AG04450 (cell line): ENCODE measurements at regions of chr14 and their contacts with region 1.

Region 1: GRCh38 chr14:64026600-64026999 is 173.8 kb downstream of the SYNE2 start:
- DNase-seq: no peak
- H3K4me3 ChIP-seq: no peak overlapping the region
- H3K27ac ChIP-seq: no peak overlapping the region
- H3K27me3 ChIP-seq: no peaks in the 10 kb centered on the region
- CTCF ChIP-seq: no peak

Region 2: DNA sequence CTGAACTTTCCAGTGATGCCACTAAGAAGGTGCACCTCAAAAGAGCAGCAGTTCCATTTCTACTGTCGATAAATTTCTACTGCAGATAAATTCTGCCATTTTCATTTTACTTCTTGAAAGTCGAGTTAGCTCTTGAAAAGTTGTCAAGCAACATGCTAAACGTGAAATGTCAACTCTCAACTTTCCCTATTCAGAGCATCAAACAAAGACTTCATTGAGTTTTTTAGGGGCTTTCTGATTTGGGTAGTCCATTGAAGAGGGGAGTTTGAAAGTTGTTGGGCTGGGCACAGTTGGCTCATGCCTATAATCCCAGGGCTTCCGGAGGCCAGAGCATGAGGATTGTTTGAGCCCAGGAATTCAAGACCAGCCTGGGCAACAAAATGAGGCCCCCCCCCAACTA is 233.2 kb before region 1 on chr14:
- CTCF ChIA-PET with region 1: no interaction called
- POLR2A ChIA-PET with region 1: no interaction called
- DNase-seq: no peak
- H3K4me3 ChIP-seq: no peak overlapping the region
- H3K27ac ChIP-seq: no peak overlapping the region
- H3K27me3 ChIP-seq: peaks cover 5% of the 10 kb centered on the region
- CTCF ChIP-seq: no peak

Region 3: DNA sequence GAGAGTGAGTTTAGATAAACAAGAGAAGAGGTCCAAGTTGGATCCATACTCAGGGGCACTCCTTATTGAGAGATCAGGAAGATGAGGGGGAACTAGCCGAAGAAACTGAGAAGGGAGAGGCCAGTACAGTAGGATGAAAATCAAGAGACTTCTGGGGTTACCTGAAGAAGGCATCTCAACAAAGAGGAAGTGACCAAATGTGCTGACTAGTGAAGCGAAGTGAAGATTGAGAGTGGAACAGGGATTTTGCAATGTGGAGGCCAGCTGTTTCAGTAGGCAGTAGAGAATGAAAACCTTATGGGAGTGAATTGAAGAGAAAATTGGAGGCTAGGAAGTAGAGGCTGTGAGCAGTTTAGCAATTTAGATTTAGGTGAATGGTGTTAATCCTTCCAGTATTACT is 20.8 kb before region 1 on chr14:
- CTCF ChIA-PET with region 1: interaction called, 19 read pairs
- POLR2A ChIA-PET with region 1: no interaction called
- DNase-seq: no peak
- H3K4me3 ChIP-seq: no peak overlapping the region
- H3K27ac ChIP-seq: no peak overlapping the region
- H3K27me3 ChIP-seq: no peaks in the 10 kb centered on the region
- CTCF ChIP-seq: no peak

Region 4: DNA sequence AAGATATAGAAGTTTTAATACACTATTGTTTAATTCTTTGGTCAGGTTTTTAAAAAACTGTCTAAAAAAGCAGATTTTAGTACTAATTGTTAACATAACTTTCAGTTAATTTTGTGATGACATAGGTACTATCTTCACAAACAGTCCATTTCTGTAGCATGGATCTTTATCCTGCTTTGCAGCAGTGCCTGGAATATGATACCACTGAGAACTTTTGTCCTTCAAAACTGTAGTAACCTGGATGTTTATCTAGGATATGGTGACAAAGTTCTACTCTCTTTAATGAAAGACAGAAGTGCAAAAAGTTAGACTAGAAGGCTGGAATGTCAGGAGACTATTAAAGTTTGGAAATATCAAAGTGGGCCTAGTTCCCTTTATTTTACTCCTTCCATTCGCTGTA is 13.9 kb before region 1 on chr14:
- CTCF ChIA-PET with region 1: interaction called, 19 read pairs
- POLR2A ChIA-PET with region 1: no interaction called
- DNase-seq: no peak
- H3K4me3 ChIP-seq: no peak overlapping the region
- H3K27ac ChIP-seq: no peak overlapping the region
- H3K27me3 ChIP-seq: no peaks in the 10 kb centered on the region
- CTCF ChIP-seq: no peak